PC-9 (cell line): ENCODE measurements at regions of chr13 and their contacts with region 1.

Region 1: DNA sequence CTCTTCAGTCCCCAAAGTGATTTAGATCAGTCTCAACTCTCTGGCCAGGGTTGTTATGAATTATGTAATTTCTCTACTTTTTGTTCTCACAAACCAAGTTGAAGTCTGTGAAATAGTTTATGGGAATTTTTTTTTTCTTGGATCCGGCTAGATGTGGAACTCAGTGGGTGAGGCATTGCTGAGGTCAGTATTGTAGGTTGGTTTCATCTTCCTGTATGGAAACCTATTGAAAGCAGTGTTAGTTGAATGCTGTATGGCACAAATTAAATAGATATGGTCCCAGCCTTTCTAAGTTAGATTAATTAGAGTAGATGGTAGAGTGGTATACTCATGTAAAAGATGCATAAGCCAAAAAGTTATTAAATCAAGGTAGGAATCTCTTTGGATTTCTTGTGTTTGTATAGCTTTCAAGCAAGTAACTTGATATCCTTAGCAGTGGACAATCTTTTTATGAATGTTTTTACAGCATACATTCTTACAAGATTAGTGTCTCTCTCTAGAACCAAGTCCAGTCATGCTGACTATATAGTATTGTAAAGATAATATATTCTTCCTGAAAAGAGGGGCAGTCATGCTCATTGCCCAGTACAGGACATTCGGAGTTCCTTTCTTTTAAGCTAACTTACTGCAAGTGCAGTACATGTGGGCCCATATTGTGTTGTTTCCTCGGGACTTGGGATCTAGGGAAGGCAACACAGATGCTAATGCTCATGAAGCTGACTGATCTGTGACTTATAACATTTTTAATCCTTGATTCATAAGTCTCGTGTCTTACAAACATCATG is 2541.1 kb downstream of the PCDH9 start:
- DNase-seq: peak; percentile 25 to 78
- H3K4me3 ChIP-seq: no peak overlapping the region
- H3K27ac ChIP-seq: peak overlapping the region; percentile 93
- H3K4me1 ChIP-seq: peaks cover 26% of the 10 kb centered on the region
- H3K27me3 ChIP-seq: no peaks in the 10 kb centered on the region
- CTCF ChIP-seq: no peak

Region 2: DNA sequence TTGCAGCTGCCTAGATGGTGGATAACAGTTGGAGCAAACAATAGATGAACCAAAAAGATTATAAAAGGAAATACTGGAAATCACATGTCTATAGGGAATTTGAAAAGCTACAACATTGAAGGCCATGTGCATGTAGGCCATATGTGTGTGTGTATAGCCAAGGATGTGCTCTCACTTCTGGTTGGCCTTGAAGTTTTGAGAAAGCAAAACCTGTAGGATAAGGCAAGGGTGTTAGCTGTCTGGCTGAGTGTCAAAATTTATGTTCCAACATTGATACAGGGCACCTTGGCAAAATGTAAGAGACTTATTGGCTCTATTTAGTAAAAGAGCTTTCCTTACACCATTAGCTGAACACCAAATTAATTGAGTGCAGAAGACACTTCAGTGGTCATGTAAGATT is 1549.8 kb before region 1 on chr13:
- CTCF ChIA-PET with region 1: no interaction called
- POLR2A ChIA-PET with region 1: no interaction called
- intact Hi-C with region 1: no loop called
- DNase-seq: no peak
- H3K4me3 ChIP-seq: no peak overlapping the region
- H3K27ac ChIP-seq: no peak overlapping the region
- H3K4me1 ChIP-seq: no peaks in the 10 kb centered on the region
- H3K27me3 ChIP-seq: no peaks in the 10 kb centered on the region
- CTCF ChIP-seq: no peak

Region 3: GRCh38 chr13:64293922-64294321 is 395.2 kb before region 1 on chr13:
- CTCF ChIA-PET with region 1: no interaction called
- POLR2A ChIA-PET with region 1: no interaction called
- intact Hi-C with region 1: no loop called
- DNase-seq: no peak
- H3K4me3 ChIP-seq: no peak overlapping the region
- H3K27ac ChIP-seq: no peak overlapping the region
- H3K4me1 ChIP-seq: peaks cover 10% of the 10 kb centered on the region; the same call in 1 of the 2 replicates
- H3K27me3 ChIP-seq: no peaks in the 10 kb centered on the region
- CTCF ChIP-seq: no peak

Region 4: GRCh38 chr13:64675299-64675818 is 13.7 kb before region 1 on chr13:
- CTCF ChIA-PET with region 1: no interaction called
- POLR2A ChIA-PET with region 1: no interaction called
- intact Hi-C with region 1: loop called (anchors 2 kb)
- DNase-seq: peak; percentile 36 to 84
- H3K4me3 ChIP-seq: no peak overlapping the region
- H3K27ac ChIP-seq: peak overlapping the region; percentile 71
- H3K4me1 ChIP-seq: peaks cover 10% of the 10 kb centered on the region
- H3K27me3 ChIP-seq: no peaks in the 10 kb centered on the region
- CTCF ChIP-seq: no peak

Region 5: DNA sequence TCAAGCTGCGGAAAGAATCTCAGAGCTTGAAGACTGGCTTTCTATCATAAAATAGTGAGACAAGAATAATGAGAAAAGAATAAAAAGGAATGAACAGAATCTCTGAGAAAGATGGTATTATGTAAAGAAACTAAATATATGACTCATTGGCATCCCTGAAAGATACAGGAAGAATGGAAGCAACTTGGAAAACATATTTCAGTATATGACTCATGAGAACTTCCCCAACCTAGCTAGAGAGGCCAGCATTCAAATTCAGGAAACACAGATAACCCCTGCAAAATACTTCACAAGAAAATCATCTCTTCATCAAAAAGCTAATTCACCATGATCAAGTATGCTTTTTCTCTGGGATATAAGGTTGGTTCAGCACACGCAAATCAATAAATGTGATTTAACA is 223.1 kb after region 1 on chr13:
- CTCF ChIA-PET with region 1: no interaction called
- POLR2A ChIA-PET with region 1: no interaction called
- intact Hi-C with region 1: loop called (anchors 5 kb)
- DNase-seq: peak in 1 of 2 experiments; percentile 36
- H3K4me3 ChIP-seq: no peak overlapping the region
- H3K27ac ChIP-seq: peak overlapping the region; percentile 65
- H3K4me1 ChIP-seq: peaks cover 11% of the 10 kb centered on the region; the same call in 1 of the 2 replicates
- H3K27me3 ChIP-seq: no peaks in the 10 kb centered on the region
- CTCF ChIP-seq: no peak